Activated T-helper 1 cell treated with anti-CD3 and anti-CD28 coated beads, Interleukin-12 subunit alpha, Interleukin-12 subunit beta, Interleukin-2, Interleukin-4 antibody, amounts not matched to agents 30 ng/mL and 10 ng/mL and 1 ng/mL, durations not matched to agents 14 hours and 24 hours and 36 hours (primary cell): ENCODE measurements at regions of chr14 and their contacts with region 1.

Region 1: GRCh38 chr14:22505697-22506377 is 83.2 kb downstream of the DAD1 start:
- DNase-seq: no peak
- H3K4me3 Mint-ChIP-seq: peak overlapping the region; percentile 95
- H3K27ac Mint-ChIP-seq: peak overlapping the region; percentile 96
- H3K4me1 Mint-ChIP-seq: peaks cover 78% of the 10 kb centered on the region
- H3K27me3 Mint-ChIP-seq: no peaks in the 10 kb centered on the region

Region 2: GRCh38 chr14:21852061-21852664 is 653.7 kb before region 1 on chr14:
- intact Hi-C with region 1: loop called (anchors 5 kb)
- DNase-seq: peak; percentile 55
- H3K4me3 Mint-ChIP-seq: peak overlapping the region; percentile 75
- H3K27ac Mint-ChIP-seq: peak overlapping the region; percentile 73
- H3K4me1 Mint-ChIP-seq: peaks cover 13% of the 10 kb centered on the region
- H3K27me3 Mint-ChIP-seq: peaks cover 24% of the 10 kb centered on the region

Region 3: DNA sequence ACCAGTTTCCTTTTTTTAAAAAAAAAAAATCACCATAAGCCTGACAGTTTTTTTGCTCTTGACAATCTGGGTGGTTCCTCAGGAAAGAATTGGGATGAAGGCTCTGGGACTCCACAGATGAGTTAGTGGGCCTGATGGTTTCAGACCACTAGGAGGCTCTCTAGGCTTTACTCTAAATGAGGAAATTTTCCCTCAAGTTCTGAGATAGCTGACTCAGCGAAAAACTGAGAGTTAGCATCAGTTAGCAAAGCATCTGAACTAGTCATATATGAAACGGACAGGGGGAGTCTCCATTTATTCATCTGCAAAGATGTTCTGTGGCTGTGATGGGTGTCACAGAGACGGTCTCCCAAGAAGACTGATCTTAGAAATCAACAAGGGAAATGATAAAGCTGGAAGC is 517.9 kb before region 1 on chr14:
- intact Hi-C with region 1: loop called (anchors 5 kb)
- DNase-seq: no peak
- H3K4me3 Mint-ChIP-seq: peak overlapping the region; percentile 30
- H3K27ac Mint-ChIP-seq: peak overlapping the region; percentile 86
- H3K4me1 Mint-ChIP-seq: peaks cover 24% of the 10 kb centered on the region
- H3K27me3 Mint-ChIP-seq: peaks cover 15% of the 10 kb centered on the region

Region 4: GRCh38 chr14:22200977-22201605 is 304.7 kb before region 1 on chr14:
- intact Hi-C with region 1: loop called (anchors 5 kb)
- DNase-seq: no peak
- H3K4me3 Mint-ChIP-seq: no peak overlapping the region
- H3K27ac Mint-ChIP-seq: peak overlapping the region; percentile 44
- H3K4me1 Mint-ChIP-seq: peaks cover 6% of the 10 kb centered on the region
- H3K27me3 Mint-ChIP-seq: no peaks in the 10 kb centered on the region

Region 5: DNA sequence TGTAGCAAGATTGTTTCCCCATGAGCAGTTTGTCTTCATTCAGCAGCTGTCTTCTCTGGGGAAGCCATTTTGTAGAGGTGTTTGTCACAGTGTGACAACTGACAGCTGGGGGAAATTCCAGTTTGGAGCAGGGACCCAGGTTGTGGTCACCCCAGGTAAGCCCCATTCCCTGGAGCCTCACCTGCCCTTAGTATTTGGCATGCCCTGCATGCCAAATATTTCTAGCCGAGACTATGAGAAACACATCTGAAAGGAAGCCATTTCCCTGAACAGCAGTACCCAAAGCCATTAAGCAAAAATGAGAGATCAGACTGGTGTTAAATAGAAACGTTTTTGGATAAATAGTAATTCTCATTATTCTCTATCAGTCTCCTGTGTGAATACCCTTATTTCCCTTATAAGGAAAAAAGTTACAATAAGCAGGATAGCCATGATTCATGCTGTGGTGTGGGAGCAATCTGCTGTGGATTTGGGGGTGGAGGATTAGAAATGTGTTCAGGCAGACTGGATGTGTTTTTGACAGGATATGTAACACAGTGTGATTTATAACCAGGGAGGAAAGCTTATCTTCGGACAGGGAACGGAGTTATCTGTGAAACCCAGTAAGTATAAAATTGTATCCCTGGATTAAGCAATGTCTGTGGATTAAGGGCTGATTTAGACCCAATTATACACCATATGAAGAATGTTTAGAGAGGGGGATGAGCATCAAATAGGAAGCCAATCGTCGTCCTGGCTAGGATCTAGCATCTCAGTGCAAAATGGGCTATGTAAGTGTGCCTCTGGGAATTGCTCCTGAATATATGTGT is 14.2 kb after region 1 on chr14:
- intact Hi-C with region 1: loop called (anchors 2 kb)
- DNase-seq: no peak
- H3K4me3 Mint-ChIP-seq: peak overlapping the region; percentile 84
- H3K27ac Mint-ChIP-seq: peak overlapping the region; percentile 95
- H3K4me1 Mint-ChIP-seq: peaks cover 98% of the 10 kb centered on the region
- H3K27me3 Mint-ChIP-seq: no peaks in the 10 kb centered on the region

Region 6: DNA sequence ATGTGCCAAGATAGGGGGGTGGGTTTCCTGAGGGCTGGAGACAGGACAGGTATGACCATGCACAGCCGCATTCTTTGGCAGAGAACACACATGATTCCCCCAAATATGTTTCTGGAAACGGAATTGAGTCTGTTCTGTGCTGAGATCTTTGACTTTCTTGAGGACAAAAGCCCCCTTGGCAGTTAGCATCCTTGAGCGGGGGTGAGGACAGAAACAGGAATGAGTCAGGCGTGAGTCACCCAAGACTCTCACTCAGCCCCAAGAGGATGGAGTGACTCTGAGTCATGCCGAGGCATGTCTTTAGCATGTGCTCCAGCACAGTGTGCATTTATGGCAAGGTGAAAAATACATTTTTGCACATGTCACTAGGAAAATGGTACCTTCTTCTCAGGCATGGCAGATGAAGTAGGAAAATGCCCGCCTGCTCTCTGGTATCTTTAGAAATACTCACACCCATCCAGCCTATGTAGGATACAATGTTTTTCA is 31.1 kb after region 1 on chr14:
- intact Hi-C with region 1: loop called (anchors 2 kb)
- DNase-seq: peak; percentile 80
- H3K4me3 Mint-ChIP-seq: peak overlapping the region; percentile 88
- H3K27ac Mint-ChIP-seq: peak overlapping the region; percentile 94
- H3K4me1 Mint-ChIP-seq: peaks cover 95% of the 10 kb centered on the region
- H3K27me3 Mint-ChIP-seq: no peaks in the 10 kb centered on the region

Region 7: GRCh38 chr14:22630486-22630885 is 124.6 kb after region 1 on chr14:
- intact Hi-C with region 1: no loop called
- DNase-seq: no peak
- H3K4me3 Mint-ChIP-seq: no peak overlapping the region
- H3K27ac Mint-ChIP-seq: no peak overlapping the region
- H3K4me1 Mint-ChIP-seq: no peaks in the 10 kb centered on the region
- H3K27me3 Mint-ChIP-seq: peaks cover 13% of the 10 kb centered on the region